Activated CD4-positive, alpha-beta memory T cell treated with anti-CD3 and anti-CD28 coated beads, Interleukin-2, amount 10 ng/mL, durations not matched to agents 7 days and 5 days (primary cell): ENCODE measurements at regions of chr3 and their contacts with region 1.

Region 1: GRCh38 chr3:129160891-129161859 is at the start of gene ISY1:
- DNase-seq: peak; percentile 88
- H3K4me3 Mint-ChIP-seq: peak within 1 kb of the TSS; percentile 87
- H3K27ac Mint-ChIP-seq: peak within 1 kb of the TSS; percentile 94
- H3K4me1 Mint-ChIP-seq: peaks cover 45% of the 10 kb centered on the region
- H3K27me3 Mint-ChIP-seq: no peaks in the 10 kb centered on the region
- total RNA-seq, gene ISY1: 63.9 to 66.2 TPM

Region 2: DNA sequence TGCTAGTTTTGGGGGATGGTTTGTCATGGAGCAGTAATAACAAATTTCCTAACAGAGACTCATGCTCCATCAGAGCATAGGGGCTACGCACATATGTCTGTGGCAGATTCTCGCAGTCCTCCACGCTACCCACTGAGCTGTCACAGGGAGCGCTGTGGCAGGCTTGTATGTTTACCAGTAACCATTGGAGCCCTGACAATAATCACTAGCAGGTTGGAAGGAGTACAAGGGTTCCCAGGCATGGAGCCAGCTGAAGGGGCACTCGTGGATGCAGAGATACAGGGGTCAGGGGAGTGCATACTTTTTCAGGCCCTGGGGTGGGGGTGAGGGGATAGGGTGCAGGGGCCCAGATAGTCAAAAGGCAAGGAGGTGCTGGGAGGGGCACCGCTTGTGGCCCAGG is 108.5 kb before region 1 on chr3:
- CTCF ChIA-PET with region 1: interaction called, 33 read pairs
- POLR2A ChIA-PET with region 1: interaction called, 8 read pairs
- DNase-seq: no peak
- H3K4me3 Mint-ChIP-seq: no peak overlapping the region
- H3K27ac Mint-ChIP-seq: peak overlapping the region; percentile 28
- H3K4me1 Mint-ChIP-seq: peaks cover 7% of the 10 kb centered on the region
- H3K27me3 Mint-ChIP-seq: peaks cover 18% of the 10 kb centered on the region

Region 3: GRCh38 chr3:129106331-129106730 is 54.8 kb before region 1 on chr3:
- CTCF ChIA-PET with region 1: no interaction called
- POLR2A ChIA-PET with region 1: no interaction called
- DNase-seq: no peak
- H3K4me3 Mint-ChIP-seq: no peak overlapping the region
- H3K27ac Mint-ChIP-seq: no peak overlapping the region
- H3K4me1 Mint-ChIP-seq: peaks cover 22% of the 10 kb centered on the region
- H3K27me3 Mint-ChIP-seq: no peaks in the 10 kb centered on the region

Region 4: DNA sequence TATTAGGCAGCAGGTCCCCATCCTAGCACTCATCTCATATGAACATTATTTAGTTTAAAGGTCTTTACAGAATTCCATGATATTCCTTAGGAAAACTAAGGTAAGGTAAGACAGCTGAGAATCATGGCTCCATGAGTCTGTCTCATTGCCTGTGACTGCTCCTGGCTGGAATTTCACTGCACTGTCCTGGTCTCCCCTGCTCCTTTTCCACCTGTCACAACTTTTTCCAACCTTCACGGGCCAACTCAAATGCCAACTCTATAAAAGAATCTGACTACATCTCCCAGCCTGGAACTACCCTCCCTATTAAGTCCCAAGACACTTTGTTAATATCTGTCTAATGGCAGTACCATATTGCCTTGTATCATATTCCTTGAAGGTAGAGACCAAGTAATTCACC is 14.9 kb after region 1 on chr3:
- CTCF ChIA-PET with region 1: interaction called, 13 read pairs
- POLR2A ChIA-PET with region 1: interaction called, 9 read pairs
- DNase-seq: no peak
- H3K4me3 Mint-ChIP-seq: no peak overlapping the region
- H3K27ac Mint-ChIP-seq: no peak overlapping the region
- H3K4me1 Mint-ChIP-seq: peaks cover 81% of the 10 kb centered on the region
- H3K27me3 Mint-ChIP-seq: no peaks in the 10 kb centered on the region

Region 5: DNA sequence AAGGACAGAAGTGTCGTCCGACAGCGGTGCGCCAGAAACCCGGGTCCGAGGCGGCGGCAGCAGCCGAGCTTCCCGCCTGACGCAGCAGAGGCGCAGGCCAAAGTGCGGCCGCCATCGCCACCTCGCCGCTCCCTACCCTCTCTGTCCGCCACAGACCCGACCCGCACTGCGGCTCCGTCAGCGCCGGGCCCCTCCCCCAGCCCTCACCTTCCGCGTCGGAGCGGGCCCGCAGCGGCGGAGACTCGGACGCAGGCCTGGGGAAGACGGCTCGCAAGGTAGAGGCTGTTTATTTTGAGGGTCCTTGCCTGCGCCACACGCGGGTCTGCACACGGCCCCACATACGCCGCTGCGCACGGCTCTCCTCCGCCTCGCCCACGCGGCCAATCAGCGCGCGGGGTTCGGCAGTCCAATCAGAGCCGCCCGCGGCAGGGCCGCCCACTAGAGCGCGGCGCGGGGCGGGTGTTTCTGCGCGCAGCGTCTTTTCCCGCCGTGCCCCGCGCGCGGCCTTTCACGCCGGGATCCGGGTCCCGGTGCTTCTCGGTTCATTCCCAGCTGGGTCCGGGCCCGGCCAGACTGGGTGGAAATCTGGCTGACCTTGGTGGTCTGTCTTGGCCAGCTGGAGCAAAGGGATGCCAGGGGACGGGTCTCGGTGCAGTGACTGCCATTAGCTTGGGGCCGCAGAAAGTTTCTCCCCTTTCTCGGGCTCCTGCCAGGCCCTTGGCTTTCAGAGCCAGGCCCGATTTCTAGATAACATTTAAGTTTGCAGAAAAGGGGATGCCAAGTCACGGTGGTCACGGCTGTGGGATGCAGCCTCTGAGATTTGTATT is 22.6 kb after region 1 on chr3 and contains the start of gene CNBP:
- CTCF ChIA-PET with region 1: interaction called, 10 read pairs
- POLR2A ChIA-PET with region 1: interaction called, 11 read pairs
- DNase-seq: peak; percentile 93
- H3K4me3 Mint-ChIP-seq: peak within 1 kb of the TSS; percentile 94
- H3K27ac Mint-ChIP-seq: peak within 1 kb of the TSS; percentile 93
- H3K4me1 Mint-ChIP-seq: peaks cover 48% of the 10 kb centered on the region
- H3K27me3 Mint-ChIP-seq: no peaks in the 10 kb centered on the region
- total RNA-seq, gene CNBP: 321 to 322 TPM

Region 6: GRCh38 chr3:129233538-129233937 is 72.4 kb after region 1 on chr3:
- CTCF ChIA-PET with region 1: interaction called, 5 read pairs
- POLR2A ChIA-PET with region 1: interaction called, 22 read pairs
- DNase-seq: no peak
- H3K4me3 Mint-ChIP-seq: no peak overlapping the region
- H3K27ac Mint-ChIP-seq: peak overlapping the region; percentile 64
- H3K4me1 Mint-ChIP-seq: peaks cover 77% of the 10 kb centered on the region
- H3K27me3 Mint-ChIP-seq: no peaks in the 10 kb centered on the region

Region 7: DNA sequence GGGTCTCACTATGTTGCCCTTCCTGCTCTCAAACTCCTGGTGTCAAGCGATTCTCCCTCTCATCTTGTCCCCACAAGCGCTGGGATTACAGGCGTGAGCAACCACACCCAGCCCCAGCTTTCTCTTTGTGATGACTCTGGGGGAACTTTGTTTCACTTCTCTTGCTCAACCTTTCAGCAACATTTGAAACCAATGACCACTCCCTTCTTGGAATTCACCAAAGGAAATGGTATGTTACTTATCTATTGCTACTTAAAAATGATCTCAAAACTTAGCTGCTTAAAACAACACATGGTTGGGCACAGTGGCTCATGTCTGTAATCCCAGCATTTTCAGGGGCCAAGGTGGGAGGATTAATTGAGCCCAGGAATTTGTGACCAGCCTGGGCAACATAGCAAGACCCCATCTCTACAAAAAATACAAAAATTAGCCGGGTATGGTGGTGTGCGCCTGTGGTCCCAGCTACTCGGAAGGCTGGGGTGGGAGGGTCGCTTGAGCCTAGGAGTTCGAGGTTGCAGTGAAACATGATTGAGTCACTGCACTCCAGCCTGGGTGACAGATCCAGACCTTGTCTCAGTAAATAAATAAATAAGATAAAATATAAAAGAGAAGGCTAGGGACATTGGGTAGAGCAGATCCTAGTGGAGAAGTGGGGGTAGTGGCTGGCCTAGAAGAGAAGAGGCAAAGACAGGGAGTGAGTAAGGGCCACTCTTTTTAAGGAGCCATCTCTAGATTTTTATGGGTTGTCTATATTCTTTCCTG is 78.0 kb after region 1 on chr3:
- CTCF ChIA-PET with region 1: no interaction called
- POLR2A ChIA-PET with region 1: interaction called, 22 read pairs
- DNase-seq: peak; percentile 64
- H3K4me3 Mint-ChIP-seq: peak overlapping the region; percentile 59
- H3K27ac Mint-ChIP-seq: peak overlapping the region; percentile 97
- H3K4me1 Mint-ChIP-seq: peaks cover 59% of the 10 kb centered on the region
- H3K27me3 Mint-ChIP-seq: no peaks in the 10 kb centered on the region